CD14-positive monocyte (primary cell): ENCODE measurements at regions of chr9 and their contacts with region 1.

Region 1: GRCh38 chr9:34591248-34591916 is 1.9 kb upstream of the CNTFR start:
- DNase-seq: peak; percentile 61 to 76 (median 63)
- H3K4me3 ChIP-seq: peak overlapping the region; percentile 8 to 75 (median 40)
- H3K4me3 Mint-ChIP-seq: peak overlapping the region; percentile 77 to 91
- H3K27ac ChIP-seq: no peak overlapping the region
- H3K27ac Mint-ChIP-seq: no peak overlapping the region
- H3K4me1 ChIP-seq: peaks cover 33 to 38% of the 10 kb centered on the region in 2 donors
- H3K4me1 Mint-ChIP-seq: peaks cover 38% of the 10 kb centered on the region
- H3K27me3 ChIP-seq: peaks cover 53 to 73% of the 10 kb centered on the region in 2 donors
- H3K27me3 Mint-ChIP-seq: peaks cover 70 to 87% (median 73%) of the 10 kb centered on the region in 3 donors
- CTCF ChIP-seq: peak; percentile 96

Region 2: GRCh38 chr9:33820231-33820745 is 771.1 kb before region 1 on chr9:
- intact Hi-C with region 1: no loop called
- DNase-seq: no peak
- H3K4me3 ChIP-seq: peak overlapping the region in 1 of 3 experiments; percentile 91
- H3K4me3 Mint-ChIP-seq: peak overlapping the region; percentile 90 to 98
- H3K27ac ChIP-seq: peak overlapping the region in 1 of 2 donors; percentile 99
- H3K27ac Mint-ChIP-seq: peak overlapping the region in 3 of 7 donors; percentile 32 to 98 (median 96)
- H3K4me1 ChIP-seq: peaks cover 30 to 43% of the 10 kb centered on the region in 2 donors
- H3K4me1 Mint-ChIP-seq: peaks cover 34% of the 10 kb centered on the region
- H3K27me3 ChIP-seq: no peaks in the 10 kb centered on the region
- H3K27me3 Mint-ChIP-seq: no peaks in the 10 kb centered on the region
- CTCF ChIP-seq: no peak

Region 3: GRCh38 chr9:34446468-34446891 is 144.9 kb before region 1 on chr9:
- intact Hi-C with region 1: loop called in 1 of 2 experiments (anchors 10 kb)
- DNase-seq: no peak
- H3K4me3 ChIP-seq: no peak overlapping the region
- H3K4me3 Mint-ChIP-seq: no peak overlapping the region
- H3K27ac ChIP-seq: no peak overlapping the region
- H3K27ac Mint-ChIP-seq: no peak overlapping the region
- H3K4me1 ChIP-seq: no peaks in the 10 kb centered on the region
- H3K4me1 Mint-ChIP-seq: peaks cover 3% of the 10 kb centered on the region
- H3K27me3 ChIP-seq: no peaks in the 10 kb centered on the region
- H3K27me3 Mint-ChIP-seq: peaks cover 0 to 2% (median 0%) of the 10 kb centered on the region in 3 donors
- CTCF ChIP-seq: no peak

Region 4: DNA sequence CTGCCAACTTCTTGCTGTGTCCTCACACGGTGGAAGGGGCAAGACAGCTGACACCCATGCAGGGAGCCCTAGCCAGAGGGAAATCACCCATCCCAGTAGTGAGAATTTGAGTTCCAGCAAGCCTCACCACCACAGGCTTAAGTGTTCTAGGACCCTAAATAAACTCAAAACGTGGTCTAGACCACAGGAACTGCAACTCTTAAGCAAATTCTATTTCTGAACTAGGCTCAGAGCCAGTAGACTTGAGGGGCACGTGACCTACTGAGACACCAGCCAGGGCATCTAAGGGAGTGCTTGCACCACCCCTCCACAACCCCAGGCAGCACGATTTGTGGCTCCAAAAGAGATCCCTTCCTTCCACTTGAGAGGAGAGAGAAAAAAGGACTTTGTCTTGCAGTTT is 270.7 kb after region 1 on chr9:
- intact Hi-C with region 1: no loop called
- DNase-seq: no peak
- H3K4me3 ChIP-seq: no peak overlapping the region
- H3K4me3 Mint-ChIP-seq: peak overlapping the region in 1 of 2 donors; percentile 13
- H3K27ac ChIP-seq: no peak overlapping the region
- H3K27ac Mint-ChIP-seq: no peak overlapping the region
- H3K4me1 ChIP-seq: peaks cover 16 to 18% of the 10 kb centered on the region in 2 donors
- H3K4me1 Mint-ChIP-seq: peaks cover 16% of the 10 kb centered on the region
- H3K27me3 ChIP-seq: no peaks in the 10 kb centered on the region
- H3K27me3 Mint-ChIP-seq: peaks cover 0 to 3% (median 3%) of the 10 kb centered on the region in 3 donors
- CTCF ChIP-seq: no peak